Endothelial cell of umbilical vein (primary cell): ENCODE measurements at regions of chr2 and their contacts with region 1.

Region 1: DNA sequence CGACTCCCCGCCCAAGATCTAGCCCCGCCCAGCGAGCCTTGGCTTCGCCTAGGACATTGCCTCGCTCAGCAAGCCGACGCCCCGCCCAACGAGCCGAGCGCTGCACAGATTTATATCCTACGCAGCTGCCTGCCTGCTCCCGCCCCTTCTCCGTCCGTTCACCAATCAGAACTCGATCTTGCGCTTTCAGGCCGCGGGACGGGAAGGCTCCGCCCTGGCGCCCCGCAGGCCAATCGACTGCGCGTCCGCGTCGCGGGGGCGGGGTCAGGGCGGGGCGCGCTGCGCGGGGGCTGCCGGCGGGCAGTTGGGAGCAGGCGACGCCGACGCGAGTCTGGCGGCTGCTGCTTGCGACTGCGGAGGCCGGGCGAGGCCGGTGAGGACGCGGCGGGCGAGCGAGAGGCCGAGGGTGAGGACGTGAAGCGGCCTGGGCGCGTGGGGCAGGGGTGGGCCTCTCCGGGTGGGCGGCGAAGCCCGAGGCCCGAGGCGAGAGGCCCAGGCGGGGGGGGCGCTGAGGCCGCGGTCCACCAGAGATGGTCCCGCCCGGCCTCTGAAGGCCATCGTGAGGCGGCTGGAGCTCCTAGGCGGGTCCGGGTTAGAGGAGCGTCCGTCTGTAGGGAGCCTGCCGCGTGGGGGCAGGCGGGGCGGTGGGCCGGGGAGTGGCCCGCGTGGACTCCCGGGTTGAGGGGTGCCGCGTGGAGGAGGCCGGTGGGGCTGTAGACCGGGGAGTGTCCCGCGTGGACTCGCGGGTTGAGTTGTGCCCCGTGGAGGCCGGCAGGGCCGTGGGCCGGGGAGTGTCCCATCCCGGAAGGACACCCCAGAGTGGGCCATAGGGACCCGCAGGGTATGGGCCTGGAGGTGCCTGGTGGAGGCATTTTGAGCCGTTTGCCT is at the start of gene FARP2:
- DNase-seq: peak; percentile 99
- H3K4me3 ChIP-seq: peak within 1 kb of the TSS; percentile 48 to 91 (median 62)
- H3K27ac ChIP-seq: peak within 1 kb of the TSS; percentile 33
- H3K4me1 ChIP-seq: peaks cover 21% of the 10 kb centered on the region
- H3K27me3 ChIP-seq: no peaks in the 10 kb centered on the region
- CTCF ChIP-seq: no peak
- POLR2A ChIP-seq: peak; percentile 89
- total RNA-seq, gene FARP2: 40.6 and 45.3 TPM in 2 replicates

Region 2: DNA sequence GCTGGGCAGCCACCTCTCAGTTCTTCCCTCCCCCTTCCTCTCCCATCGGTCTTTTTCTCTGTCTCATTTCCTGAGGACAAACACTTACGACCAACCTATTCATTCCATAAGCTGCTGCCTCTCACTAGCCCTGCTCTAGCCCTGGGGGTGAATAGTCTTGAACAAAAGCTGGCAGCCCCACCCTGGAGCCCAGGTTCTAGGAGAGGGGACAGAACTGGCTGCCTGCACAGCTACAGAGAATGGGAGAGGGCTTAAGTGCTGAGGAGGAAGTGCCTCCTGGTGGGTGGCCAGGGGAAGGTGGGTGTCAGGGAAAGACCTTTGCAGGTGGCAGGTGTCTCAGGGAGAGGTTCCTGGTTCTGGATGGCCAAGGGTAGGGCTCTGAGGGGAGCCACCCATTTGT is 144.9 kb before region 1 on chr2:
- CTCF ChIA-PET with region 1: no interaction called
- POLR2A ChIA-PET with region 1: no interaction called
- dilution Hi-C with region 1: no loop called
- intact Hi-C with region 1: no loop called
- DNase-seq: no peak
- H3K4me3 ChIP-seq: no peak overlapping the region
- H3K27ac ChIP-seq: no peak overlapping the region
- H3K4me1 ChIP-seq: no peaks in the 10 kb centered on the region
- H3K27me3 ChIP-seq: no peaks in the 10 kb centered on the region
- CTCF ChIP-seq: no peak
- POLR2A ChIP-seq: no peak

Region 3: DNA sequence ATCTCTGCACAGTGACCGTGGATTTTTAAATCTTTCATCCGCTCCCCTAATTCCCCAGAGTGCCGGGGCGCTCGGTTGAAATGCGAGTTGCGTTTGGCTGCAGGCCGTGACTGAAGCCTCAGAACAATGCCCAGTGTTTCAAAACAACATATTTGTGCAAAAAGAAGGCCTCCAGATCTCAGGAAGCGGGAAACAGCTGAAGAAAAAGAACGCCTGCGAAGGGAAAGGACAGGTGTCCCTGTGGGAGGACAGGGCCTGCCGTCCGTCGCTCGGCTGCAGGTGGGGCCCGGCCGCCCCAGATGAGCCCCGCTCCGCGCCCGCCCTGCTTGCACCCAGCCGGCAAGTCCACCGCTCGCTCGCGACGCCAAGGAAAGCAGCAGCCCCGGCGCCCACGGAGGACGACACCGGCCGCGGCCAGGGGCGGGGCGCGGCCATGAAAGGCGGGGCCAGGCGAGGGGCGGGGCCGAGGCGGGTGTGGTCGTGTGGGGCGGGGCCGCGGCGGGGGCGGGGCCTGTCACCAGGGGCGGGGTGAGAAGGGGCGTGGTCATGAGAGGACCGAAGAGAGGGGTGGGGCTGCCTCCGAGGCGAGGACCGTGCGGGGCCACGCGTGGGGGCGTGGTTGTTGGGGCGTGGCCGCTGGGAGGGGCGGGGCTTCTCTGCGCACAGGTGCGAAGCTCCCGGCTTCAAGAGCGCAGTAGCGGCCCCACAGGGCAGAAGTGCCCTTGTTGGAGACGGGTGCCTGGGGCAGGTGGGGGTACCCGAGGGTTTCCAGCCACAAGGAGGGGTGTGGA is 184.7 kb after region 1 on chr2:
- CTCF ChIA-PET with region 1: no interaction called
- POLR2A ChIA-PET with region 1: no interaction called
- dilution Hi-C with region 1: no loop called
- intact Hi-C with region 1: loop called (anchors 1 kb)
- DNase-seq: peak; percentile 62
- H3K4me3 ChIP-seq: peak overlapping the region in 2 of 3 experiments; percentile 29 to 41
- H3K27ac ChIP-seq: no peak overlapping the region
- H3K4me1 ChIP-seq: peaks cover 19% of the 10 kb centered on the region
- H3K27me3 ChIP-seq: no peaks in the 10 kb centered on the region
- CTCF ChIP-seq: no peak
- POLR2A ChIP-seq: peak; percentile 18

Region 4: DNA sequence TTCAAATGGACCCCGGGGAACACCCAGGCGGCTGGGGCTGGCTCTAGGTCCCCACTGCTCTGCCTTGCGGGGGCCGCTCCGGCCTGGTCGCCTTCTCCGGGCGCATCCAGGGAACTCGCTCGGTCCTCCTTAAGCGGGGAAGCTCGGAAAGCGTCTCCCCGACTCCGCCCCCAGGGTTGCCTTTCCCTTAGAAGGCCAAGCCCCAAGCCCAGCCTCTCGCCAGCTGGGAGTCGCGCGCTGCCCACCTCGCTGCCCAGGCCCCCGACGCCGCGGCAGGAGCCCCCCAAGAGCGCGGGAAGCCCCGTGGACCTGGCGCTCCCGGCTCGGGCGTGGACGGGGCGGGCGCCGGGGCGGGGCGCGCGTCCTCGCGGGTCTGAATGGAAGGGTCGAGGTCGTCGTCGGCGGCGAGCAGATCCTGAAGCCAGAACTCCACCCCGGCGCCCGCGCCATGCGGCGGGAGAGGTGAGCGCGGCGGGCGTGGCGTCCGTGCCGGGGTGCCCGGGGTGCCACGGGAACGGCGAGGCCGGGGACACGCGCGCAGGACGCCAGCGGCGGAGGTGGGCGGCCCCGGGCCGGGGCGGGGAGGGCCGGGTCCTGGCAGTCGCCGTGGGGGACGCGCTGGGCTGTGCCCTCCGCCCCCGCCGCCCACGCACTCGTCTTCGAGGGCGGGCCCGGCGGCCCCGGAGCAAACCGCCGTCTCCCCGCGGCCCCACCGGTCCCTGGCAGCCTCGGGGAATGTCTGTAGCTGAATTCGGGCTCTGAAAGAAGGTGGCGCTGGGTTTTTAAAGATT is 202.5 kb after region 1 on chr2 and contains the start of gene BOK:
- CTCF ChIA-PET with region 1: no interaction called
- POLR2A ChIA-PET with region 1: no interaction called
- dilution Hi-C with region 1: no loop called
- intact Hi-C with region 1: loop called (anchors 5 kb)
- DNase-seq: peak; percentile 84
- H3K4me3 ChIP-seq: peak within 1 kb of the TSS; percentile 71 to 80 (median 72)
- H3K27ac ChIP-seq: peak within 1 kb of the TSS; percentile 25
- H3K4me1 ChIP-seq: peaks cover 30% of the 10 kb centered on the region
- H3K27me3 ChIP-seq: no peaks in the 10 kb centered on the region
- CTCF ChIP-seq: no peak
- POLR2A ChIP-seq: peak; percentile 68
- total RNA-seq, gene BOK: 52.4 and 76.0 TPM in 2 replicates

Region 5: DNA sequence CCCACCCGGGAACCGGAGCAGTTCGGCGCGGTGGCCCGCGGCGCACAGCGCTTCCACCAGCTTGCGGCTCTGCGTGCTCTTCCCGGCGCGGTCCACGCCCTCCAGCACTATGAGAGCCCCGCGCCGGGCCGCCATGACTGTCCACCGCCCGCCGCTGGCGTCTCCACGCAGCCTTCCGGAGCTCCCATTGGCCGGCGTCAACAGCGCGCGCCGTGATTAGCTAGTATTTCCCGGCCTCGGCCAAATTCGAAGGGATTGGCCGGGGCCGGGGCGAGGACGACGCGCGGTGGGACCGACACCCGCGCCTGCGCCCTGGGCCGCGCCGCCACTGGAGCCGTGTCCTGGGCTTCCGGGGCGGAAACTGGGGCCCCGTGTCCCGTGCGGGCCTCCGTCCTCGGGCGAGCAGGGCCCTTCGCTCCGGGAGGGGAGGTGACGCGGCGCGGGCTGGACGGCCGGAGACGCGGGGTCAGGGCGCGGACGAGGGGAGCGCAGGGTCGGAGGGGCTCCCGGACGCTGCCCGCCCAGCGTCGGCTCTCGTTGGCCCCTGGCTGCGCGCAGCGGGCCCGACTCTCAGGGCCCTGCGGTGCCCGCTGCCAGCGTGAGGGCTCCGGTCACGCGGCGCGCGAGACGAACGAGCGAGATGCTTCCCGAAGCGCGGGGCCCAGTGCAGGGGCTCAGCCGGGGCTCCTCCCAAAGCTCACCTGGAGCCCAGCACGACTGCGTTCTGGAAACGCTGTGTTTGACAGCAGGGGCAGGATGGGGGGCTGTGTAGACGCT is 330.6 kb after region 1 on chr2 and contains the start of gene DTYMK:
- CTCF ChIA-PET with region 1: no interaction called
- POLR2A ChIA-PET with region 1: no interaction called
- dilution Hi-C with region 1: no loop called
- intact Hi-C with region 1: loop called (anchors 1 kb)
- DNase-seq: peak; percentile 96
- H3K4me3 ChIP-seq: peak within 1 kb of the TSS; percentile 90 to 93 (median 92)
- H3K27ac ChIP-seq: peak within 1 kb of the TSS; percentile 75
- H3K4me1 ChIP-seq: peaks cover 13% of the 10 kb centered on the region
- H3K27me3 ChIP-seq: no peaks in the 10 kb centered on the region
- CTCF ChIP-seq: no peak
- POLR2A ChIP-seq: peak; percentile 91
- total RNA-seq, gene DTYMK: 91.9 and 104 TPM in 2 replicates

Region 6: GRCh38 chr2:241702132-241703031 is 346.2 kb after region 1 on chr2:
- CTCF ChIA-PET with region 1: no interaction called
- POLR2A ChIA-PET with region 1: no interaction called
- dilution Hi-C with region 1: no loop called
- intact Hi-C with region 1: loop called (anchors 5 kb)
- DNase-seq: peak; percentile 82
- H3K4me3 ChIP-seq: peak overlapping the region; percentile 49 to 75 (median 64)
- H3K27ac ChIP-seq: peak overlapping the region; percentile 15
- H3K4me1 ChIP-seq: peaks cover 6% of the 10 kb centered on the region
- H3K27me3 ChIP-seq: no peaks in the 10 kb centered on the region
- CTCF ChIP-seq: peak; percentile 45 to 56
- POLR2A ChIP-seq: no peak

Region 7: DNA sequence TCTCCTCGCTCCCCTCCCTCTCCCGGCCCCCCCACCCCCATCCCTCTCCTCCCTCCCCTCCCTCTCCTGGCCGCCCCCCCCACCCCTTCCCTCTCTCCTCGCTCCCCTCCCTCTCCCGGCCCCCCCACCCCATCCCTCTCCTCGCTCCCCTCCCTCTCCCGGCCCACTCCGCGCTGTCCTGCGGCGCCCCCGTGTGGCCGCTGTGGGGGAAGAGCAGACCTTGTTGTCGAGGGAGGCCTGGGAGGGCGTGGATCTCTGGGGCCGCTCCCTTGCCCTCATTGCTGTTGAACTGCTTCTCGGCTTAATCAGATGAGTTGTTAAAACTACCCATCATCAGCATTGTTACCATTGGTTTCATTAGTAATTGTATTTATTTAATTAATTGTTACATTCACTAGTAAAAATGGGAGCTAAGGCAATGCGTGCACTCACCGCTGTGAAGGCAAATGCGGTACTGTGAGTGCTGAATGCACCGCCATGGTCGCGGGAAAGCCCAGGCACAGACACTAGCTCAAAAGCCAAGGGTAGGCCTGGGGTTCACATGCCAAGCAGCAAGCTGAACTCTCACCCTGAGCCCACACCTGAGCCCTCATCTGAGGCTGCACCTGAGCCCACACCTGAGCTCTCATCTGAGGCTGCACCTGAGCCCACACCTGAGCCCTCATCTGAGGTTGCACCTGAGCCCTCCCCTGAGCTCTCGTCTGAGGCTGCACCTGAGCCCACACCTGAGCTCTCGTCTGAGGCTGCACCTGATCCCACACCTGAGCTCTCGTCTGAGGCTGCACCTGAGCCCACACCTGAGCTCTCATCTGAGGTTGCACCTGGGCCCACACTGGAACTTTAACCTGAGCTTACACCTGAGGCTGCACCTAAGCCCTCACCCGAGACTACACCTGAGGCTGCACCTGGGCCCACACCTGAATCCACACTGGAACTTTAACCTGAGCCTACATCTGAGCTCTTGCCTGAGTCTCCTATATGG is 522.1 kb after region 1 on chr2:
- CTCF ChIA-PET with region 1: no interaction called
- POLR2A ChIA-PET with region 1: no interaction called
- dilution Hi-C with region 1: no loop called
- intact Hi-C with region 1: loop called (anchors 5 kb)
- DNase-seq: peak; percentile 49
- H3K4me3 ChIP-seq: no peak overlapping the region
- H3K27ac ChIP-seq: no peak overlapping the region
- H3K4me1 ChIP-seq: peaks cover 3% of the 10 kb centered on the region
- H3K27me3 ChIP-seq: no peaks in the 10 kb centered on the region
- CTCF ChIP-seq: peak; percentile 48 to 86
- POLR2A ChIP-seq: no peak